Activated CD4-positive, alpha-beta memory T cell treated with anti-CD3 and anti-CD28 coated beads, Interleukin-2, amount 10 ng/mL, durations not matched to agents 7 days and 5 days (primary cell): ENCODE measurements at regions of chr4 and their contacts with region 1.

Region 1: DNA sequence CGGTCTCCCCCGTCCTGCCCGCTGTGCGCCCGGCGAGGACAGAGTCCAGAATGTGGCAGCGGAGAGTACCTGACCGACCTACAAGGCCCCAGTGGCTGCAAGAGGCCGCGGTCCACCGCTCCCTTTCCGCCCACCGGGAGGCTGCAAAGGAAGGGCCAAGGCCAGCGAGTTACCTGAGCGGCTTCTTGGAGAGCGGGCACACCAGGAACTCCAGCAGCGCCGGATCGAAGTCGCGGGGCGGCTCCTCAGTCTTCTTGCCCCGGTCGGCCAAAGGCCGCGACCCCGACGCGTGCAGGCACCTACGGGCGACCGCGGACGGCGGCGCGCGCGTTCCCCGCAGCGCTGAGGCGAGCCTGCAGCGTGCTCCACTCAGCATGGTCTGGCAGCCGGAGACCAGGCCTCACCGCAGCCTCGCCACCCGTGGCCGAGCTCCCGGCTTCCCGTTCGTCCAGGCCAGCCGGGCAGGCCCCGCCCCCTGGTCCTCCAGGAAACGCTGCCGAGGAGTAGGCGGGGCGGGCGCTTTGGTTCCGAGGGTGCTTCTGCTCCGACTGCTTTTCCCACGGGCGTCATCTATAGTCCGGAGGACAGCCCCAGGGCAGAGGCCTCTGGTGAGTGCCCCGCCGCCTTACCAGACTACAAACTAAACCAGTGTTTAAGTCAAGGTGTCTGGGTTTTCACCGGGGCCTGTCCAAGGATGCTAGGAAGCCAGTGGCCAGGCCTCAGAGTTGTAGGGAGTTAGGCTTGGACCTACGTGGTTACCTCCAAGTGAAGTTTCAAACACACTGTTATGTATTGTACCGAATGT is at the start of gene PYURF:
- DNase-seq: peak; percentile 79
- H3K4me3 Mint-ChIP-seq: peak within 1 kb of the TSS; percentile 83
- H3K27ac Mint-ChIP-seq: peak within 1 kb of the TSS; percentile 53
- H3K4me1 Mint-ChIP-seq: peaks cover 45% of the 10 kb centered on the region
- H3K27me3 Mint-ChIP-seq: no peaks in the 10 kb centered on the region
- total RNA-seq, gene PYURF: 50.8 to 52.1 TPM

Region 2: DNA sequence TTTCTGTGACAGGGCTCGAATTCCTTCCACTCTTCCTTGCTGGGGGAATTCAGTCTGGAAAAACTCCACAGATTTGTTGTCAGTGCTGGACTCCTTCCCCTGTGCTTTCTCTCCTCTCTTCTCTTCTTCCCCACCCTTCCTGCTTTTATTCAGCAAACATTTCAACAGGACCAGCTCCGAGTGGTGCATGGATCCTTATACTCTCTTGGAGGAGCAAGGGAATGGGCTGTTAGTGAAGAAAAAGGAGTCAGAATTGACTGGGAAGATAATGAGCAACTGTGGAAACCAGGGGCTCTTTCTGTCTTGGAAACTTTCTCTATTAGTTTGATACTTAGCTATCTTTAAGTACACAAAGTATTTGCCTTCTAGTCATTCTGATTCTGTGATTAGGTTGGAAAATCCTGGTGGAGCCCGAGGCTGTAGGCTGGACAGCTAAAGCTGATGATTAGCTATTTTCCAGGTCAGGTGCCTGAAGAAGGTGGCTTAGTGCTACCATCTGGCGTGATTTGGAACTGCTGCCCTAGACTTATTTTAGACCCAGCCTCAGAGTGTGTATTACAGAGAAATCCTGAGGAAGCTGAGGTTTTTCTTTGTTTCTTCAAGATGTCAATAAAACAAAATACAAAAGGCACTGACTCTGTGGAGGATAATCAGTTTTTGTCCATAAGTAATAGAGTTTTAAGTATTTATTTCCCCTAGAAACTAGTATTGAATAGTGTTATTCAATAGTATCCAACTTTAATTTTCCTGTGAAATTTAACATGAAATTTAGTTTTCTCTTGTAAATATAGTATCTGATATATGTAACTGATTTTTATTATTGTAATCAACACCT is 135.7 kb after region 1 on chr4:
- CTCF ChIA-PET with region 1: interaction called, 10 read pairs
- POLR2A ChIA-PET with region 1: interaction called, 3 read pairs
- DNase-seq: peak; percentile 37
- H3K4me3 Mint-ChIP-seq: no peak overlapping the region
- H3K27ac Mint-ChIP-seq: no peak overlapping the region
- H3K4me1 Mint-ChIP-seq: peaks cover 11% of the 10 kb centered on the region
- H3K27me3 Mint-ChIP-seq: no peaks in the 10 kb centered on the region

Region 3: GRCh38 chr4:89024051-89024675 is 500.6 kb after region 1 on chr4:
- CTCF ChIA-PET with region 1: interaction called, 19 read pairs
- POLR2A ChIA-PET with region 1: no interaction called
- DNase-seq: peak; percentile 44
- H3K4me3 Mint-ChIP-seq: no peak overlapping the region
- H3K27ac Mint-ChIP-seq: no peak overlapping the region
- H3K4me1 Mint-ChIP-seq: no peaks in the 10 kb centered on the region
- H3K27me3 Mint-ChIP-seq: no peaks in the 10 kb centered on the region